BJ (cell line): ENCODE measurements at regions of chr6 and their contacts with region 1.

Region 1: GRCh38 chr6:83215131-83216047 is 22.2 kb downstream of the RWDD2A start:
- DNase-seq: no peak
- H3K4me3 ChIP-seq: no peak overlapping the region
- H3K27me3 ChIP-seq: no peaks in the 10 kb centered on the region
- CTCF ChIP-seq: peak; percentile 90

Region 2: DNA sequence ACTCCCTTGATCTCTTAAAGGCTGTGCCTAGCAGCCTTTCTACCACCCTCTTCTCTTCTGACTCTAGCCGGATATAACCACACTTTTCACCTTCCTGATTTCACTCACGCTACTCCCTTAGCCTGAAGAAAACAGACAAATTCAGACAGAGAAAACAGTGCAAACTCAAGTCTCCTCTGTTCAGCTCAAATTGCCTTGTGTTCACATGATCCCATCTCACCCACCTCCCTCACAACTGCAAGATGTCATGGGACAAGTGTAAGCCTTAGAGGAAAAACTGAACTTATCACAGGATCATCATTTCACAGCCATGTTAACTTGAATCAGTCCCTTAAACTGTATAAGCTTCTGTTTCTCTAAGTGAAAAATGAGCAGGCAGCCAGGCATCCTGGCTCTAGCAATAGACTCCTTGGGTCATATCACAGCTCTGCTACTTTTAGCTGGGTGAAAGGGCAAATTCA is 1396.5 kb before region 1 on chr6:
- CTCF ChIA-PET with region 1: no interaction called
- POLR2A ChIA-PET with region 1: no interaction called
- DNase-seq: no peak
- H3K4me3 ChIP-seq: no peak overlapping the region
- H3K27me3 ChIP-seq: no peaks in the 10 kb centered on the region
- CTCF ChIP-seq: no peak

Region 3: GRCh38 chr6:83183082-83183828 is 32.1 kb before region 1 on chr6:
- CTCF ChIA-PET with region 1: interaction called, 11 read pairs
- POLR2A ChIA-PET with region 1: no interaction called
- DNase-seq: peak; percentile 87
- H3K4me3 ChIP-seq: no peak overlapping the region
- H3K27me3 ChIP-seq: no peaks in the 10 kb centered on the region
- CTCF ChIP-seq: no peak

Region 4: GRCh38 chr6:83199863-83200225 is 15.5 kb before region 1 on chr6:
- CTCF ChIA-PET with region 1: interaction called, 16 read pairs
- POLR2A ChIA-PET with region 1: no interaction called
- DNase-seq: no peak
- H3K4me3 ChIP-seq: no peak overlapping the region
- H3K27me3 ChIP-seq: no peaks in the 10 kb centered on the region
- CTCF ChIP-seq: no peak